Activated CD4-positive, alpha-beta memory T cell treated with anti-CD3 and anti-CD28 coated beads for 36 hours (primary cell): ENCODE measurements at regions of chr1 and their contacts with region 1.

Region 1: DNA sequence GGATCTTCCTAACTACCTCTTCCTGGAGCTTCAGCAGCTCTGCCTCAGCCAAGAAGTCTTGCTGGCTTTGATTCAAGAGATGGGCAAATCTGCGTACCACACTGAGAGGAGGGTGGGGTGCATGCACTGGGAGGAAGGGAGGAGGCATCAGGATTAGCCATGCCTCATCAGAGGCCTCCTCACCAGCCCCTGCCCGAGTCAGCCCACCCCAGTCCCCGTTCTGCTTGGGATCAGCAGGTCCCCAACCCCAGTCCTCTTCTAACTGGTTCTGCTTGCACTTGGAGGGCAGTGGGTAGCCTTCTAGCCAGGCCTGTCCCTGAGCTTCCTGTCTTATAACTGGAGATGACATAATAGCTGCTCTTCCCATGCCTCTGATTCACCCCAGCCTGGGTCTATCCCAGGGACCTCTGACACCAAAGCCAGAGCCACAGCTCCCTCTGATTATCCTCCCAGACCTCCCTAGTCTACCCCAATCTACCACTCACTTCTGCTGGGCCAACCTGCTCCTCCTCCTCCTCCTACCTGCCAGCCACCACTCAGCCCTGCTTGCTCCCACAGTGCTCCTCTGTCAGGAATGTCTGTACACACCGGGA is 31.5 kb downstream of the IQGAP3 start:
- DNase-seq: no peak
- H3K4me3 Mint-ChIP-seq: no peak overlapping the region
- H3K27ac Mint-ChIP-seq: no peak overlapping the region
- H3K4me1 Mint-ChIP-seq: no peaks in the 10 kb centered on the region
- H3K27me3 Mint-ChIP-seq: no peaks in the 10 kb centered on the region

Region 2: DNA sequence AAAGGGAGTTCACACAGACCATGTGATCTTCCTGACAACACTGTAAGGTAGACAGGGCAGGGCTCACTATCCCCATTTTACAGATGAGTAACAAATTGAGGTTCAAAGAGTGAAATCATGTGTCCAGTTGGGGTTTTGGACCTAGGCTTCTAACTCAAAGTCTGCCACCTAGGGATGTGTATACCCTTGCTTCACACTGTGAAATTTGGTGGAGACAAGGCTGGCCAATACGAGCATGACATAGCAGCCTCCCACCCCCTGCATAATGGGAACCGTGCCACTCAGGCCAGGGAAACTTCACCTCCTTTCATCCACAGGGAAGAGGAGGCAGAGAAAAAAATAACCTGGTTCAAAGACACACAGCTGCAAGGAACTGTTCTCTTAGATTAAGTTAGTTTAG is 24.6 kb after region 1 on chr1:
- CTCF ChIA-PET with region 1: no interaction called
- POLR2A ChIA-PET with region 1: no interaction called
- intact Hi-C with region 1: loop called (anchors 2 kb)
- DNase-seq: no peak
- H3K4me3 Mint-ChIP-seq: no peak overlapping the region
- H3K27ac Mint-ChIP-seq: no peak overlapping the region
- H3K4me1 Mint-ChIP-seq: no peaks in the 10 kb centered on the region
- H3K27me3 Mint-ChIP-seq: no peaks in the 10 kb centered on the region